ENCODE measurements at regions of chr7 and their contacts with region 1.

Region 1: DNA sequence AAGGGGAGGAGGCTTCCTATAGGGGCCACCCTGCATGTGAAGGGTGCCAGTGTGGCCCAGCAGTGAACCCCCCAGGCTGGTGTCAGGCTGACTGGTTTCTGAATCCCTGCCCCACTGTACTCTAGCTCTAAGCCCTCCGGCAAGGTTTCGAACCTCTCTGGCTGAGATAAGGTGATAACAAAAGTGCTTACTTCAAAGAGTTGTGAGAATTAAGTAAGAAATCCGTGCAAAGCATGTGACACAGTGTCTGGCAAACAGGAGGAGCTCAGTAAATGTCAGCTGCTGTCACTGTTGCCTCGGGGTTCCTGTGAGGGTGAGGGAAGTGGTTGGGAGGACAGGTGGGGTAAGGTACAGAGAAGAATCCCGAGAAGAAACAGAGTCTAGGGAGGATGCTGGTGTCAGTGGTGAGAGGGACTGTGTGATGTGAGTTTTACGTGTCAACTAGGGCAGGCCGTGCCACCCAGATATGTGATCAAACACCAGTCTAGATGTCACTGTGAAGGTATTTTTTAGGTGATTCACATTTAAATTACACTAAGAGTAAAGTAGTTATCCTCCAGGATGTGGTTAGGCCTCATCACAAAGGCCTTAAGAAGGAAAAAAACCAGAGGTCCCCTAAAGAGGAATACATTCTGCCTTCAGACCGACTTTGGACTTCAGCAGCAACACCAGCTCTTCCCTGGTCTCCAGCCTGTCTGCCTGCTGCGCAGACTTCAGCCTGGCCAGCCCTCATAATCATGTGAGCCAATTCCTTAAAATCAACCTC is 64.4 kb downstream of the BPGM start:
- DNase-seq: peak; percentile 49
- H3K4me3 Mint-ChIP-seq: peak overlapping the region; percentile 77
- H3K27ac Mint-ChIP-seq: peak overlapping the region; percentile 87
- H3K4me1 Mint-ChIP-seq: peaks cover 33% of the 10 kb centered on the region
- H3K27me3 Mint-ChIP-seq: no peaks in the 10 kb centered on the region

Region 2: DNA sequence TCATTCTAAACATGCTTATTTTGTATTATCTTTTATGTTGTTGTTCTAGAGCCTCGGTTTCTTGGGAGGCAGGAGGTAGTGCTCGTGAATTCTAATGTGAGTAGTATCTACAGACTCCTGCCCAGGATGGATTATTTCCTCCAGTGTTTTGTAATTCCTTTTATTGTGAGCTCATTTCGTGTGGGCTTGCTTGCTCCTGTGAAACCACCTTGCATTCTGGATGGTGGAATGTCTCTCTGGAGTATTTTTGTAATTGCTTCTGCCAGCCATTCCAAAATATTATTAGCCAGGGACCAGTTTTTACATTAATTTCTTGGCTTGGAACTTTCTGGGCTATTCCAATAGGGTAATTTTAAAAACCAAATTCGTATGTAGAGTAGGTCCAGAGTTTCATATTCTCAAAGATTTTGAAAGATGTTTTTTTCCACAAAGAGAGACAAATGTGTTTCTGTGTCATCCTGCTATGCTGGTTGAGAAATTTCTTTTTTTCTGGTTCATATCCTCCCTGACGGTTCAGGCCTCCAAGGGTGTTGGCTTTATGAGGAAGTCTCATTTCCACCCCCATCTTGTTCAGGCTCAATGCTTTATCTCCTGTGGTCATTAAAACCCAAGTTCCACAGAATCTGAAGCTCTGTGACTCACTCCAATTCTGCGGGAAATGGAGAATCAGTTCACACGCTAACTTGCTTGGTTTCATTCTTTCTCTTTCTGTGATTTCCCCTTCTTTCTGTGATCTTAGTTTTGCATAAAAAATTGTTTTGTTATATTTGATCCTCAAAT is 26.7 kb after region 1 on chr7:
- intact Hi-C with region 1: loop called (anchors 1 kb)
- DNase-seq: peak; percentile 28
- H3K4me3 Mint-ChIP-seq: no peak overlapping the region
- H3K27ac Mint-ChIP-seq: peak overlapping the region; percentile 90
- H3K4me1 Mint-ChIP-seq: peaks cover 55% of the 10 kb centered on the region
- H3K27me3 Mint-ChIP-seq: no peaks in the 10 kb centered on the region

Measured in activated T-helper 2 cell treated with anti-CD3 and anti-CD28 coated beads, Interferon-gamma antibody, Interleukin-2, Interleukin-4, amounts not matched to agents 10 μg/mL and 5 μg/mL and 100 μg/mL, durations not matched to agents 14 hours and 24 hours and 36 hours (primary cell).